CD8-positive, alpha-beta T cell (primary cell): ENCODE measurements at regions of chr17 and their contacts with region 1.

Region 1: DNA sequence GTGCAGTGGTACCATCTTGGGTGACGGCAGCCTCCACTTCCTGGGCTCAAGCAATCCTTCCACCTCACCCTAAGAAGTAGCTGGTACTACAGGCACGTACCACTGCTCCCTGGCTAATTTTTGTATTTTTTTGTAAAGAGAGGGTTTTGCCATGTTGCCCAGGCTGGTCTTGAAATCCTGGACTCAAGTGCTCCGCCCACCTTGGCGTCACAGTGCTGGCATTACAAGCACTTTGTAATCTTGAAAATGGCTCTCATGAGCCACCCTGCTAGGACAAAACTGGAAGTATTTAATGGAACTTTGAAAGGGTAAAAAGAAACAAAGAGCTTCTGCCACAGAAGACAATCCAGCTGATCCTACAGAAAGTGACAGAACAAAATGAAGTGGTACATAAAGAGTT is 9.2 kb downstream of the SUMO2 start:
- DNase-seq: no peak
- ATAC-seq: no peak
- H3K4me3 ChIP-seq: no peak overlapping the region
- H3K4me3 Mint-ChIP-seq: no peak overlapping the region
- H3K27ac ChIP-seq: no peak overlapping the region
- H3K27ac Mint-ChIP-seq: no peak overlapping the region
- H3K4me1 ChIP-seq: peaks cover 9% of the 10 kb centered on the region
- H3K4me1 Mint-ChIP-seq: peaks cover 19% of the 10 kb centered on the region
- H3K27me3 ChIP-seq: no peaks in the 10 kb centered on the region
- H3K27me3 Mint-ChIP-seq: no peaks in the 10 kb centered on the region
- CTCF ChIP-seq: no peak

Region 2: DNA sequence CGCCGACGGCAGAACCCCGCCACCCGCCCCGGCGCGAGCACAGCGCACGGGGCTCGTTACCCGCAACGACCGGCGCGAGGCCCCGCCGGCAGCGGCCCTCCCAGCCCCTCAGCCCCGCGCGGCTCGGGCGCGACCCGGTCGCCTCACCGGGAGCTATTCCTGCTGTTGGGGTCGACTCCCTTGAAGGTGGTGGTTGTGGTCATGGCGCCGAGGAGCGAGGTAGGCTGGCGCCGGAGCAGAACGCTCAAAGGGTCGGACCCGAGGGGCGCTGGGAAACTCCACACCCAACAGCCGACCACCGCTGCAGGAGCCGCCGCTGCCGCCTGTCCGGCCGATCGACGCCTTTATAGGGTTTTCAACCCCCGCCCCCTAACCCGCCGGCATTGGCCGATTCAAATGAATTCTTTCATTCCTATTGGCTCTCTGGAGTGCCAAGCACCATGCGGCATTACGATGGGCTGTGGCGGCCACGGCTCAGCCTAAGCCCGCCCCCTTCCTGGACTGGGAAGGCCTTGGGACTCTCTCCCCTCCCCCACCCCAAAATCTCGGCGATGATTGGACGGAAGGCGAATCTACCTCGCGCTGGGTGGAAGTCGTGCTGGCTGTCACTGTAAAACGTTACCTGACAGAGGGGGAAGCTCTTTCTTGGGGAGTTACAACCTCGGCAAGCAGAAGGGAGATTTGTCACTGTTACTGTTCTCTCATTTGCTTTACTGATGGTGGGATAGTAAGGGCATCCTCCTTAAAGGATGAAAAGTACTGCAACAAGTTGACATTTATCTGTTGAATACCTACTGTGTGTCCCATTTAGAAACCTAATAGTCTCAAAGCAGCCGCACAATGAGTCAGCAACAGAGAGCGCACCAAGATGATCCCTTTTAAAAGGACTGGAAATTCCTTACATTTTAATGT is 19.1 kb before region 1 on chr17 and contains the start of gene JPT1:
- CTCF ChIA-PET with region 1: interaction called, 8 read pairs
- POLR2A ChIA-PET with region 1: interaction called, 4 read pairs
- intact Hi-C with region 1: loop called in 1 of 2 experiments (anchors 1 kb)
- DNase-seq: peak; percentile 94 to 99 (median 97)
- ATAC-seq: peak; percentile 97
- H3K4me3 ChIP-seq: peak within 1 kb of the TSS; percentile 88 to 94
- H3K4me3 Mint-ChIP-seq: peak within 1 kb of the TSS; percentile 91
- H3K27ac ChIP-seq: peak within 1 kb of the TSS; percentile 78 to 81
- H3K27ac Mint-ChIP-seq: peak within 1 kb of the TSS; percentile 87
- H3K4me1 ChIP-seq: peaks cover 23% of the 10 kb centered on the region
- H3K4me1 Mint-ChIP-seq: peaks cover 31% of the 10 kb centered on the region
- H3K27me3 ChIP-seq: no peaks in the 10 kb centered on the region
- H3K27me3 Mint-ChIP-seq: no peaks in the 10 kb centered on the region
- CTCF ChIP-seq: no peak
- total RNA-seq, gene JPT1: 15.1 to 17.3 TPM

Region 3: DNA sequence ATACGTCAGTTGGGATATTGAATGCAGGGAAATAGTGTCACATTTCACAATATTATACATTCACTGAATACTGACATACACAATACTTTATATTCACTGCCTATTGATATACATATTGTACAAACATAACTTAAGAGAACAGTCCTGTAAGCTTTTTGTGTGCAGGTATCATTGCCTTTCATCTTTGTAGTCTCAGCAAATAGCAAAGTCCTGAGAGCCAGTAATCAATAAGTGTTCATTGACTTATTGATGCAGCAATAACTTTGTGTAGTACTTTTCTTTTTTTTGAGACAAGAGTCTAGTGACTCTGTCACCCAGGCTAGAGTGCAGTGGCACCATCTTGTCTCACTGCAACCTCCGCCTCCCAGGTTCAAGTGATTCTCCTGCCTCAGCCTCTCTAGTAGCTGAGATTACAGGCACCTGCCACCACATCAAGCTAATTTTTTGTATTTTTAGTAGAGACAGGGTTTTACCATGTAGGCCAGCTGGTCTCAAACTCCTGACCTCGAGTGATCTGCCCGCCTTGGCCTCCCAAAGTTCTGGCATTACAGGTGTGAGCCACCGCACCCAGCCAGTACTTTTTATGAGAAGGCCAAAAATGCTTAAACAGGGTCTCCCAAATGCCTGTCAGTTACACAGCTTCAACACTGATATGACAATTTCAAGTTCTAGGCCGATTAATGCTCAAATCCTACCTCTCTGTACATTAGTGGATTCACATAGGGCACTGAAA is 26.5 kb after region 1 on chr17:
- CTCF ChIA-PET with region 1: interaction called, 46 read pairs
- POLR2A ChIA-PET with region 1: interaction called, 3 read pairs
- intact Hi-C with region 1: loop called in 1 of 2 experiments (anchors 2 kb)
- DNase-seq: no peak
- ATAC-seq: no peak
- H3K4me3 ChIP-seq: no peak overlapping the region
- H3K4me3 Mint-ChIP-seq: no peak overlapping the region
- H3K27ac ChIP-seq: no peak overlapping the region
- H3K27ac Mint-ChIP-seq: no peak overlapping the region
- H3K4me1 ChIP-seq: peaks cover 7% of the 10 kb centered on the region
- H3K4me1 Mint-ChIP-seq: peaks cover 4% of the 10 kb centered on the region
- H3K27me3 ChIP-seq: no peaks in the 10 kb centered on the region
- H3K27me3 Mint-ChIP-seq: no peaks in the 10 kb centered on the region
- CTCF ChIP-seq: no peak